ENCODE measurements at regions of chr10 and their contacts with region 1.

Region 1: GRCh38 chr10:96244354-96244753 is 27.0 kb downstream of the BLNK start:
- DNase-seq: peak; percentile 91
- ATAC-seq: peak; percentile 99
- H3K4me3 ChIP-seq: peak overlapping the region in 2 of 5 experiments; percentile 10 to 22
- H3K4me3 Mint-ChIP-seq: peak overlapping the region; percentile 77
- H3K27ac ChIP-seq: peak overlapping the region; percentile 84 to 90
- H3K27ac Mint-ChIP-seq: peak overlapping the region; percentile 91
- H3K4me1 ChIP-seq: peaks cover 65 to 70% of the 10 kb centered on the region in 2 donors
- H3K4me1 Mint-ChIP-seq: peaks cover 76% of the 10 kb centered on the region
- H3K27me3 ChIP-seq: no peaks in the 10 kb centered on the region
- H3K27me3 Mint-ChIP-seq: no peaks in the 10 kb centered on the region
- CTCF ChIP-seq: no peak

Region 2: DNA sequence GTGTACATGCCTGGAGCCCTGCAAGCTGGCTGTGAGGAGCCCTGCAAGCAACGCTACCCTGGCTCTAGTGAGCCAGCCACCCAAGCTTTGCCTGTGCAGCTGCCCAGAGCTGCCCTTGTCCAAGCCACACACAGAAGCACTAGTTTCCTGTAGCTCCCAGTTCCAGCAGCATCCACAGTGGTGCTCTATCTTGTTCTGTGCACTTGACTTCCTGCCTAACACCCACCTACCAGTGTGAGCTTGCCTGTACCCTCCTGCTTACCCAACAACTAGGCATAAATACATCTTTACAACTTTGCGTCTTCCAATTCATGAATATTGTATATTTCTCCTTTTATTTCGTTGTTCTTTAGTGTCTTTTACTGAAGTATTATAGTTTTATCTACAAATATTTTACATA is 146.5 kb before region 1 on chr10:
- CTCF ChIA-PET with region 1: no interaction called
- POLR2A ChIA-PET with region 1: no interaction called
- intact Hi-C with region 1: no loop called
- DNase-seq: no peak
- ATAC-seq: no peak
- H3K4me3 ChIP-seq: no peak overlapping the region
- H3K4me3 Mint-ChIP-seq: no peak overlapping the region
- H3K27ac ChIP-seq: no peak overlapping the region
- H3K27ac Mint-ChIP-seq: no peak overlapping the region
- H3K4me1 ChIP-seq: no peaks in the 10 kb centered on the region
- H3K4me1 Mint-ChIP-seq: peaks cover 3% of the 10 kb centered on the region
- H3K27me3 ChIP-seq: peaks cover 0 to 60% (median 35%) of the 10 kb centered on the region in 4 experiments
- H3K27me3 Mint-ChIP-seq: peaks cover 76% of the 10 kb centered on the region
- CTCF ChIP-seq: no peak

Region 3: DNA sequence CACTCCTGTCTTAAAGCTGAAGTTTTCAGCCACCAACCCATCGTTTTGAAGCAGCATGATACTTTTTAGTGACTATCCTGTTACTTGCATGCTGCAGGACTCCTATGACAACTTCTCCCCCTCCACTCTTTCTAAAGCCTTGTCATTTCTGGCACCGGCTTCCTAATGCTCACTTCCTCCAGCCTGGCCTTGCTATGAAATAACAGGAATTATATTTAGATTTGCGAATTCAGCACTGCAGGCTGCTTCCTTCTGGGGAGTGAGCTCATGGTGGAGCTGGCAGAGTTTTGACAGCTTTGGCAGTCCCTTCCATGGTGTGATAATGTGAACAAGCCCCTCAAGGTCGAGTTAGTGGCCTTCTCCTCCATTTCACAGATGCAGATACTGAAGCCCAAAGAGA is 13.6 kb after region 1 on chr10:
- CTCF ChIA-PET with region 1: interaction called, 13 read pairs
- POLR2A ChIA-PET with region 1: interaction called, 3 read pairs
- intact Hi-C with region 1: no loop called
- DNase-seq: no peak
- ATAC-seq: no peak
- H3K4me3 ChIP-seq: peak overlapping the region in 1 of 5 experiments; percentile 0
- H3K4me3 Mint-ChIP-seq: peak overlapping the region; percentile 63
- H3K27ac ChIP-seq: peak overlapping the region; percentile 36 to 79
- H3K27ac Mint-ChIP-seq: peak overlapping the region; percentile 87
- H3K4me1 ChIP-seq: peaks cover 79 to 83% of the 10 kb centered on the region in 2 donors
- H3K4me1 Mint-ChIP-seq: peaks cover 76% of the 10 kb centered on the region
- H3K27me3 ChIP-seq: no peaks in the 10 kb centered on the region
- H3K27me3 Mint-ChIP-seq: no peaks in the 10 kb centered on the region
- CTCF ChIP-seq: no peak

Region 4: DNA sequence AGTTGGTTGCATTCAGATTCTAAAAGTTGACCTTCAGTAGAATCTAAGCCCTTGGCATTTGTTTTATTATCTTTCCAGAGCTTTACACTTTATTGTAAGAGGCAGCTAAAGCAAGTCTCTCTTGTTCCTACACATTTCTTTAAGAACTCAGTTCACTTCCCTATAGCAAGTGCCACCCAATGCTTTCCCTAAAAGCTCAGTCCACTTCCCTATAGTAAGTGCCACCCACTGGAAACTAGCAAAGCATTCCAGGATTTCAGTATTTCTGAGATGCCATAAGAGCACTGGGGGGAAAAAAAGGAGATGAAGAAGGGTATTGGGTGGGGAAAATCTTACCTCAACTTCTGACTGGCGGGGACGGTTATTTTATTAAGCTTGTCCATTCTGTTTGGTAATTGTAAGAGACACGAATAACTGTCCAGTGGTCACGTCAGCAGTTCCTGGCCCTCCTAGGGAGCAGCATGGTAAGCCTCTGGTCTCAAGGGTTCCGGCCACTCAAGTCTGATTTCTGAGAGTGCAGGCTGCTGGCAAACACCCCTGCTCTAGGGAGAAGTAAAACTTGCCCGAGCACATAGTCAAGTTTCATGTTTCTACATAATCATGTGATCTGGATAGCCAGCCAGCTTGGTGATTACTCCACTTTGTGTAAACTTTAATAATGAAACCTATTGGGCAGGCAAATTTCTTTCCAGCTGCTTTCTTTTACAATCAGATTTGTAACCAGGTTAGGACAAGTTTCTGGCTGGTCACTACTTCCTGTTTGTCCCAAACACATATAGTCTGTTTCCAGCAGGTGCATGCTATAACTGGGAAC is 26.9 kb after region 1 on chr10 and contains the start of gene BLNK:
- CTCF ChIA-PET with region 1: interaction called, 5 read pairs
- POLR2A ChIA-PET with region 1: interaction called, 6 read pairs
- intact Hi-C with region 1: loop called (anchors 1 kb)
- DNase-seq: peak; percentile 82
- ATAC-seq: peak; percentile 54
- H3K4me3 ChIP-seq: peak within 1 kb of the TSS; percentile 73 to 97 (median 96)
- H3K4me3 Mint-ChIP-seq: peak within 1 kb of the TSS; percentile 97
- H3K27ac ChIP-seq: peak within 1 kb of the TSS; percentile 79 to 88
- H3K27ac Mint-ChIP-seq: peak within 1 kb of the TSS; percentile 99
- H3K4me1 ChIP-seq: peaks cover 61 to 63% of the 10 kb centered on the region in 2 donors
- H3K4me1 Mint-ChIP-seq: peaks cover 80% of the 10 kb centered on the region
- H3K27me3 ChIP-seq: no peaks in the 10 kb centered on the region
- H3K27me3 Mint-ChIP-seq: no peaks in the 10 kb centered on the region
- CTCF ChIP-seq: no peak
- total RNA-seq, gene BLNK: 205 and 210 TPM in 2 replicates

Region 5: GRCh38 chr10:96287392-96288105 is 43.2 kb after region 1 on chr10:
- CTCF ChIA-PET with region 1: interaction called, 964 read pairs
- POLR2A ChIA-PET with region 1: interaction called, 5 read pairs
- intact Hi-C with region 1: loop called (anchors 1 kb)
- DNase-seq: peak; percentile 83
- ATAC-seq: peak; percentile 76
- H3K4me3 ChIP-seq: peak overlapping the region; percentile 42 to 77 (median 67)
- H3K4me3 Mint-ChIP-seq: peak overlapping the region; percentile 84
- H3K27ac ChIP-seq: peak overlapping the region; percentile 86
- H3K27ac Mint-ChIP-seq: peak overlapping the region; percentile 92
- H3K4me1 ChIP-seq: peaks cover 63 to 64% of the 10 kb centered on the region in 2 donors
- H3K4me1 Mint-ChIP-seq: peaks cover 76% of the 10 kb centered on the region
- H3K27me3 ChIP-seq: no peaks in the 10 kb centered on the region
- H3K27me3 Mint-ChIP-seq: no peaks in the 10 kb centered on the region
- CTCF ChIP-seq: no peak

Measured in B cell (primary cell).